ENCODE measurements at regions of chr4 and their contacts with region 1.

Region 1: GRCh38 chr4:6709230-6710114 is at the start of gene MRFAP1L1:
- DNase-seq: peak; percentile 97
- H3K4me3 ChIP-seq: peak within 1 kb of the TSS; percentile 63 to 81 (median 71)
- H3K27ac ChIP-seq: peak within 1 kb of the TSS; percentile 34
- H3K4me1 ChIP-seq: peaks cover 13% of the 10 kb centered on the region
- H3K27me3 ChIP-seq: peaks cover 4 to 7% of the 10 kb centered on the region in 2 experiments
- CTCF ChIP-seq: no peak
- POLR2A ChIP-seq: peak; percentile 69
- total RNA-seq, gene MRFAP1L1: 42.0 and 43.8 TPM in 2 replicates

Region 2: DNA sequence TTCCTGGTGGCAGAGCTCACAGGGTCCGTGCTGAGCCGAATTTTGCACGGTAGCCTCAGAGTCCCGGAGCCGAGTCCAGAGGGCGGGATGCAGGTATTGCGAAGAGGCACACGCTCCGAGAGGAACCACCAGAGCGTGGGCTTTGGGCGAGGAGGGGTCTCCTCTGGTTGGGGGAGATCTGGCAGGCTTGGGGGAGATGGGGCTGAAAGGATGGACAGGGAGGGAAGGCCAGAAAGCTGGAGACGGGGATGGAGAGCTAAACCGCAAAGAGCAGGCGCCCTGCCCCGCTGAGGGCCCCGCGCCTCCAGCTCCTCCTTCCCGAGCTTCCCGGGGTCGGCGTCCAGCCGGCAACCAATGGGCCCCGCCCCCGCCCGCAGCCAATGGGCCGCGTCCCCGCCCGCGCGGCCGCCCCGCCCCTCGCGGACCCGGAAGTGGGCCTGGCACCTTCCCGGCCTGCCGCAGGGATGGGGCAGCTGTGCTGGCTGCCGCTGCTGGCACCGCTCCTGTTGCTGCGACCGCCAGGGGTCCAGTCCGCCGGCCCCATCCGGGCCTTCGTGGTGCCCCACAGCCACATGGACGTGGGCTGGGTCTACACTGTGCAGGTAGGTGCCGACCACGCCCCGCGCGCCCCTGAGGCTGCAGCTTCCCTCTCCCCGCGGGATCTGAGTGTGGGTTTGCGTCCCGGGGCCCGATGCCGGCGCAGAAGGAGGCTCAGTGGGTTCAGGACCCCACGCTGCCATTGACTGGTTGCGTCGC is 134.5 kb before region 1 on chr4 and contains the start of gene MAN2B2:
- CTCF ChIA-PET with region 1: interaction called, 3 read pairs
- POLR2A ChIA-PET with region 1: no interaction called
- dilution Hi-C with region 1: no loop called
- intact Hi-C with region 1: loop called (anchors 2 kb)
- DNase-seq: peak; percentile 78
- H3K4me3 ChIP-seq: peak within 1 kb of the TSS; percentile 64 to 76 (median 74)
- H3K27ac ChIP-seq: peak within 1 kb of the TSS; percentile 34
- H3K4me1 ChIP-seq: peaks cover 8% of the 10 kb centered on the region
- H3K27me3 ChIP-seq: peaks cover 4 to 7% of the 10 kb centered on the region in 2 experiments
- CTCF ChIP-seq: peak in 1 of 2 donors; percentile 26
- POLR2A ChIP-seq: peak; percentile 94
- total RNA-seq, gene MAN2B2: 15.7 and 24.2 TPM in 2 replicates

Region 3: DNA sequence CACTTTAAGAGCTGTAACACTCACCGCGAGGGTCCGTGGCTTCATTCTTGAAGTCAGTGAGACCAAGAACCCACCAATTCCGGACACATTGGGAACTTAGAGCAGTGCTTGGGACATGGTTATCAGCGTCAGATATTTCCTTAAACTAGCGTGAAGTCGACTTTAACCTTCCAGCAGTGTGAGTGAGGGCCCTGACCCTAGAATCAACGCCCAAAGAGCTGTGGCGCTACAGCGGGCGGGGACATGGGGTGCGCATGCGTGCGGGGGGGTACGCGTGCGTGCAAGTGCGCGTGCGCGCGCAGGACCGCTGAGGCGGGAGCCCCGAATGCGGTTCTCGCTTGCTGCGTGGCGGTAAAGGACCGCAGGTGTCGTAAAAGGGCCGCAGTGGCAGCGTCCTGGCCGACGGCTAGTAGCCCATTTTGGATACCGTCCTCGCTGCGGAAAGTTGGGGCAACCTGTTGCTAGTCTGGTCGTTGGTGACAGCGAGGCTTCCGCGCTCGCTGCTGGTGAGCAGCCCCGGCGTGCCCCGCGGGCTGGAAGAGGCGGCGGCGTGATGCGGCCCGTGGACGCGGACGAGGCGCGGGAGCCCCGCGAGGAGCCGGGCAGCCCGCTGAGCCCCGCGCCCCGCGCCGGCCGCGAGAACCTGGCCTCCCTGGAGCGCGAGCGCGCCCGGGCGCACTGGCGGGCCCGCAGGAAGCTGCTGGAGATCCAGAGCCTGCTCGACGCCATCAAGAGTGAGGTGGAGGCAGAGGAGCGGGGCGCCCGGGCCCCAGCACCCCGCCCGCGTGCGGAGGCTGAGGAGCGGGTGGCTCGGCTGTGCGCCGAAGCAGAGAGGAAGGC is 35.6 kb before region 1 on chr4:
- CTCF ChIA-PET with region 1: interaction called, 4 read pairs
- POLR2A ChIA-PET with region 1: interaction called, 3 read pairs
- dilution Hi-C with region 1: no loop called
- intact Hi-C with region 1: loop called (anchors 1 kb)
- DNase-seq: peak; percentile 97
- H3K4me3 ChIP-seq: peak overlapping the region; percentile 25 to 71 (median 49)
- H3K27ac ChIP-seq: no peak overlapping the region
- H3K4me1 ChIP-seq: peaks cover 10% of the 10 kb centered on the region
- H3K27me3 ChIP-seq: no peaks in the 10 kb centered on the region
- CTCF ChIP-seq: no peak
- POLR2A ChIP-seq: peak; percentile 77